ENCODE measurements at regions of chr12 and their contacts with region 1.

Region 1: GRCh38 chr12:49309391-49309790 is 13.7 kb upstream of the TROAP start:
- DNase-seq: peak in 1 of 2 experiments; percentile 25
- ATAC-seq: peak in 1 of 2 experiments; percentile 59; a peak in 3 of 6 replicates
- H3K4me3 ChIP-seq: no peak overlapping the region
- H3K27ac ChIP-seq: no peak overlapping the region
- H3K4me1 ChIP-seq: 0 out of 3 replicates have a peak, but pooled peaks cover 3% of the 10 kb centered on the region
- CTCF ChIP-seq: no peak
- EP300 ChIP-seq: no peak
- POLR2A ChIP-seq: no peak
- RAD21 ChIP-seq: no peak

Region 2: GRCh38 chr12:49130151-49131050 is 179.0 kb before region 1 on chr12:
- CTCF ChIA-PET with region 1: no interaction called
- POLR2A ChIA-PET with region 1: no interaction called
- DNase-seq: peak; percentile 84 to 96
- ATAC-seq: peak; percentile 74 to 80
- H3K4me3 ChIP-seq: peak overlapping the region; percentile 93
- H3K27ac ChIP-seq: peak overlapping the region; percentile 99
- H3K4me1 ChIP-seq: peaks cover 27% of the 10 kb centered on the region
- CTCF ChIP-seq: peak; percentile 90
- EP300 ChIP-seq: no peak
- POLR2A ChIP-seq: peak; percentile 44
- RAD21 ChIP-seq: peak; percentile 22 to 62

Region 3: DNA sequence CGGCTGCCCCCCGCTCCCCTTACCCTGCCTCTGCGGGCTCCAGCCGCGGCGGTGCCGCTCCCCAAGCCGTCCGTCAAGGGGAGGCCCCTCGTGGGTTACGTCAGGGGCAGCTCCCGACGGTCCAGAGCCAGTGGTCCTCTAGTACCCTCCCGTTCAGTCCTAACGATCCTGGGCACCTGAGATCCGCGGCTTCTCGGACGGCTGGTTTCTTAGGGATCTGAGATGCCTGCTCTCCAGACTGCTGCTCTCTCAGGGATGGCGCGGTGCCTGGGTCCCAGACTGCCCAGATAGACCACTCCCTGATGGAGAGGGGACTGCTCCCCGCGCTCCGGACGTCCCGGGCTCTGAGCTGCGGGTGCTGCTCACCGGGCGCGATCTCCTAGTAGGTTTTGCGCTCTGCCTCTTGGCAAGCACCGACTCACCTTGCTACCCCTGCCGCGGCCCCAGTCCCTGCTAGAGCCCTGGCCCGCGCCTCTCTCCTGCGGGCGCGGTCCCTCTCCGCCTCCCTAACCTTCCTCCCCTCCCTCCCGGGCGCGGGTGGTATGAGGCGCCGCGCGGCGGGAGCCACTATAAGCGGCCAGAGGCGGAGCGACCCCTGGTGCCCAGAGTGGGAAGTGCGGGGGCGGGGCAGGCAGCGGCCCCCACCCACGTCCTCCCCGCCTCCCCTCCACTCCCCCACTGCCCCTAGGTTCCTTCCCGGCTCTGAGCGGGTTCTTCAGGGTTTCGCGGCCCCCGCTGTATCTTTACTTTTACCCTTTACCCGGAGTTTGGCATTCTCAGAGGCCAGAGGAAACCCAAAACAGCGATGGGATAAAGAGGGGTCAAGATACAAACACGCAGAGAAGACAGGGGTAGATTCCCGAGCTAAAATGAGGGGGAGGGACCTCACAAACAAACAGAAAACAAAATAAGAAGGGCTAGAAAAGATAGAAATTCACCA is 27.5 kb after region 1 on chr12 and contains the start of gene C1QL4:
- CTCF ChIA-PET with region 1: interaction called, 18 read pairs
- POLR2A ChIA-PET with region 1: no interaction called
- DNase-seq: peak; percentile 75 to 84
- ATAC-seq: peak; percentile 78 to 88
- H3K4me3 ChIP-seq: peak within 1 kb of the TSS; percentile 64
- H3K27ac ChIP-seq: peak within 1 kb of the TSS; percentile 71 to 82
- H3K4me1 ChIP-seq: peaks cover 12% of the 10 kb centered on the region; the same call in 2 of the 3 replicates
- CTCF ChIP-seq: peak; percentile 95
- EP300 ChIP-seq: no peak
- POLR2A ChIP-seq: peak; percentile 62
- RAD21 ChIP-seq: peak; percentile 28 to 53
- polyA plus RNA-seq, gene C1QL4: 0.99 and 1.5 TPM in 2 replicates